Heart right ventricle (tissue), 16 donors: ENCODE measurements at regions of chr6 and their contacts with region 1.

Region 1: DNA sequence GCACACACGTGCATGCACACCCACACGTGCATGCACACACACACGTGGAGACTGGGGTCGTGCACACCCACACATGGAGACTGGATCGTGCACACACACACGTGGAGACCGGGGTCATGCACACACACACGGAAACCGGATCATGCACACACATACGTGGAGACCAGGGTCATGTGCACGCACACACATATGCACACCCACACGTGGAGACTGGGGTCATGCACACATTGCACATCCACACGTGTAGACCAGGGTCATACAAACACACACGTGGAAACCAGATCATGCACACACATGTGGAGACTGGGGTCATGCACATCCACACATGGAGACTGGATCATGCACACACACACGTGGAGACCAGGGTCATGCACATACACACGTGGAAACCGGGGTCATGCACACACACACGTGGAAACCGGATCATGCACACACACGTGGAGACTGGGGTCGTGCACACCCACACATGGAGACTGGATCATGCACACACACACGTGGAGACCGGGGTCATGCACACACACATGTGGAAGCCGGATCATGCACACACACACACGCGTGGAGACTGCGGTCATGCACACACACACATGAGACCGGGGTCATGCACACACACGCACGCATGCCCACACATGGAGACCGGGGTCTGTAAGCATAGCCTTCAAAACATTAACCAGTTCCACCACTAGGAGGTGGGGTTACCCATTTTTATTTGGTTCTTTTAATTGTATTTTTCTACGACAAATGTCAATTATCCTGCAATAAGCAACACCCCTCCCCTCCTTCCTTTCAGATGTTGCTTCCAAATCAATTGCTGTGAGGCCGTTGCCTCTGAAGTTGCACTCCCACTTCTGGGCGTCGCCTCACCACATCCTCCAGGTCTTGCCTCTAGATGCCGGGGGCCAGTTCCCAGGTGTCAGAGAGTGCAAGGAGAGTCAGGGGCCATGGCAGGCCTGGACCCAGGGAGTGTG is 95.8 kb downstream of the TMEM242 start:
- DNase-seq: no peak
- ATAC-seq: peak in 3 of 8 donors; percentile 13 to 33 (median 16)
- H3K4me3 ChIP-seq: no peak overlapping the region
- H3K27ac ChIP-seq: peak overlapping the region in 3 of 10 donors; percentile 19 to 67 (median 34)
- H3K4me1 ChIP-seq: peaks cover 0 to 37% (median 13%) of the 10 kb centered on the region in 9 donors
- H3K27me3 ChIP-seq: no peaks in the 10 kb centered on the region
- CTCF ChIP-seq: peak in 8 of 9 donors; percentile 8 to 52 (median 37)

Region 2: GRCh38 chr6:157258878-157259277 is 31.4 kb after region 1 on chr6:
- intact Hi-C with region 1: no loop called
- DNase-seq: no peak
- ATAC-seq: no peak
- H3K4me3 ChIP-seq: no peak overlapping the region
- H3K27ac ChIP-seq: no peak overlapping the region
- H3K4me1 ChIP-seq: peaks cover 0 to 14% (median 8%) of the 10 kb centered on the region in 9 donors
- H3K27me3 ChIP-seq: no peaks in the 10 kb centered on the region
- CTCF ChIP-seq: no peak

Region 3: GRCh38 chr6:157269261-157269794 is 41.8 kb after region 1 on chr6:
- intact Hi-C with region 1: loop called in 7 of 10 experiments (anchors 2 to 10 kb)
- DNase-seq: peak; percentile 85 to 89
- ATAC-seq: peak; percentile 80 to 93 (median 88)
- H3K4me3 ChIP-seq: no peak overlapping the region
- H3K27ac ChIP-seq: peak overlapping the region; percentile 45 to 88 (median 74)
- H3K4me1 ChIP-seq: peaks cover 8 to 60% (median 30%) of the 10 kb centered on the region in 9 donors
- H3K27me3 ChIP-seq: no peaks in the 10 kb centered on the region
- CTCF ChIP-seq: no peak